WTC11 (cell line): ENCODE measurements at regions of chr11 and their contacts with region 1.

Region 1: DNA sequence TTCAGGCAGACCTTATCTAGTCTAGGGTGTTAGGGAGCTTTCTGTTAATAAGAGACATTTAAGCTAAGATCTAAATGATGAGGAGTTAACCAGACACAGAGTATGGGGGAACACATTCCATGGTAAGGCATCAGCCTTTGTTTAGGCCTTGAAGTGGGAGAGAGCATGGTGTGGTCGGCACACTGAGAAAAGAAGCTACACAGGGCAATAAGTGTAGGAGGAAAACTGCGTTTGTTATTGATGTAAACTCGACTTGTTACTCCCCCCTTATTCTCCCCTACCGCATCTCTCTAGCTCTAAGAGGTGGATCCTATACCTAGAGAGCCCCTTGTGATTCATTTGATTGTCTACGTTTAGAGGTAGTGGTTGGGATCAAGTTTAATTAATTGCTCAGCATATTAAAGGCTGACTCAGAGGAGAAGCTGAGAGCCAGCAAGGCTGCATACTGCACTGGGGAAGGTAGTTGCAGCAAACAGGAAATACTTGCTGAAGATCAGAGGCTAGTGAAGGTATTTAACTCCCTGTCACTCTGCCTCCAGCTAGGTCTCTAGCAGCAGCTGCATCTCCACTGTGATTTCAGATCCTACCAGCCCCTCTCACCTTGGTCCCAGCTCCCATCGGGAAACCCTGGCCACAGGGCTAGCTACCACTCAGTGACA is 86.8 kb upstream of the TEAD1 start:
- DNase-seq: no peak
- ATAC-seq: peak; percentile 95
- H3K4me3 Mint-ChIP-seq: no peak overlapping the region
- H3K27ac Mint-ChIP-seq: no peak overlapping the region
- H3K4me1 Mint-ChIP-seq: peaks cover 13% of the 10 kb centered on the region
- H3K27me3 Mint-ChIP-seq: peaks cover 34% of the 10 kb centered on the region
- CTCF ChIP-seq: no peak

Region 2: DNA sequence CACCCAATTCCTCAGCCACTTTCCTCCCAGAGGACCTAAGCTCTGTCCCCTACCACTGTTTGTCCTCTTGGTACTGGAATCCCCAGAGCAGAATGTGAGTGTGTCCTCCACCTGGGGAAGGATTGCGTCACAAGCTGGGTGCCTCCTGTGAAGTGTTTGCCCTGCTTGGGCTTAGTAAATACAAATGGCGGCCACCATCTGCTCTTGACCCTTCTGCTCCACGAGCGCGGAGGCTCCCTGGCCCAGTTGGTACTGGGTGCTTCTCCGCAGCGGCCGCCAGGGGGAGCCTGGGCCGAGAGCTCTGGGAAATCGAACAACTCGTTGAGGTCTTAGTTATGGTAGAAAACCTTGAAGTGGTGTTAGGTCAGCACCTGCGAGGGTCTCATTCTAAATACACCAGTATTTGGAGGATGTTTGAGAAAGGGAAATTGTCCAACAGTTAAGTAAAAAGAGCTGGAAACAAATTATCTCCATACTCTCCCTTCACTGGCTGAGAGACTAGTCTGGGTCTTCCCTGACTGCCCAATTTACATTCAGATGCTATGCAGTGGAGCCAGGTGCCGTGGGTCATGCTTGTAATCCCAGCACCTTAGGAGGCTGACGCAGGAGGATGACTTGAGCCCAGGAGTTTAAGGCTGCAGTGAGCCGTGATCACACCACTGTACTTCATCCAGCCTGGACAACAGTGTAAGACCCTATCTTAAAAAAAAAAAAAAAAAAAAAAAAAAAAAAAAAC is 12.1 kb after region 1 on chr11:
- CTCF ChIA-PET with region 1: interaction called, 11 read pairs
- POLR2A ChIA-PET with region 1: no interaction called
- DNase-seq: peak; percentile 81
- ATAC-seq: peak; percentile 95
- H3K4me3 Mint-ChIP-seq: no peak overlapping the region
- H3K27ac Mint-ChIP-seq: no peak overlapping the region
- H3K4me1 Mint-ChIP-seq: peaks cover 15% of the 10 kb centered on the region
- H3K27me3 Mint-ChIP-seq: no peaks in the 10 kb centered on the region
- CTCF ChIP-seq: peak; percentile 90